Gastrocnemius medialis (tissue), 4 donors: ENCODE measurements at regions of chr12 and their contacts with region 1.

Region 1: GRCh38 chr12:103884316-103884715 is 43.3 kb upstream of the NT5DC3 start:
- DNase-seq: no peak
- ATAC-seq: no peak
- H3K4me3 ChIP-seq: no peak overlapping the region
- H3K27ac ChIP-seq: no peak overlapping the region
- H3K4me1 ChIP-seq: peaks cover 0 to 5% of the 10 kb centered on the region in 2 donors
- H3K27me3 ChIP-seq: no peaks in the 10 kb centered on the region
- CTCF ChIP-seq: peak in 2 of 5 experiments; percentile 2 to 45
- POLR2A ChIP-seq: no peak

Region 2: GRCh38 chr12:103326190-103326589 is 558.1 kb before region 1 on chr12:
- in situ Hi-C with region 1: no loop called
- intact Hi-C with region 1: no loop called
- DNase-seq: no peak
- ATAC-seq: no peak
- H3K4me3 ChIP-seq: no peak overlapping the region
- H3K27ac ChIP-seq: no peak overlapping the region
- H3K4me1 ChIP-seq: no peaks in the 10 kb centered on the region
- H3K27me3 ChIP-seq: no peaks in the 10 kb centered on the region
- CTCF ChIP-seq: no peak
- POLR2A ChIP-seq: no peak

Region 3: GRCh38 chr12:103632554-103633216 is 251.6 kb before region 1 on chr12:
- in situ Hi-C with region 1: loop called in 1 of 4 experiments (anchors 10 kb)
- intact Hi-C with region 1: no loop called
- DNase-seq: no peak
- ATAC-seq: no peak
- H3K4me3 ChIP-seq: no peak overlapping the region
- H3K27ac ChIP-seq: no peak overlapping the region
- H3K4me1 ChIP-seq: peaks cover 0 to under 1% of the 10 kb centered on the region in 2 donors
- H3K27me3 ChIP-seq: no peaks in the 10 kb centered on the region
- CTCF ChIP-seq: peak in 2 of 5 experiments; percentile 21 to 38
- POLR2A ChIP-seq: no peak